Common myeloid progenitor, CD34-positive (primary cell): ENCODE measurements at regions of chr6 and their contacts with region 1.

Region 1: GRCh38 chr6:40536442-40536841 is 50.7 kb downstream of the LRFN2 start:
- DNase-seq: no peak
- H3K4me3 ChIP-seq: no peak overlapping the region
- H3K27ac ChIP-seq: no peak overlapping the region
- H3K4me1 ChIP-seq: peaks cover 0 to 16% (median 2%) of the 10 kb centered on the region in 4 experiments
- H3K27me3 ChIP-seq: no peaks in the 10 kb centered on the region

Region 2: DNA sequence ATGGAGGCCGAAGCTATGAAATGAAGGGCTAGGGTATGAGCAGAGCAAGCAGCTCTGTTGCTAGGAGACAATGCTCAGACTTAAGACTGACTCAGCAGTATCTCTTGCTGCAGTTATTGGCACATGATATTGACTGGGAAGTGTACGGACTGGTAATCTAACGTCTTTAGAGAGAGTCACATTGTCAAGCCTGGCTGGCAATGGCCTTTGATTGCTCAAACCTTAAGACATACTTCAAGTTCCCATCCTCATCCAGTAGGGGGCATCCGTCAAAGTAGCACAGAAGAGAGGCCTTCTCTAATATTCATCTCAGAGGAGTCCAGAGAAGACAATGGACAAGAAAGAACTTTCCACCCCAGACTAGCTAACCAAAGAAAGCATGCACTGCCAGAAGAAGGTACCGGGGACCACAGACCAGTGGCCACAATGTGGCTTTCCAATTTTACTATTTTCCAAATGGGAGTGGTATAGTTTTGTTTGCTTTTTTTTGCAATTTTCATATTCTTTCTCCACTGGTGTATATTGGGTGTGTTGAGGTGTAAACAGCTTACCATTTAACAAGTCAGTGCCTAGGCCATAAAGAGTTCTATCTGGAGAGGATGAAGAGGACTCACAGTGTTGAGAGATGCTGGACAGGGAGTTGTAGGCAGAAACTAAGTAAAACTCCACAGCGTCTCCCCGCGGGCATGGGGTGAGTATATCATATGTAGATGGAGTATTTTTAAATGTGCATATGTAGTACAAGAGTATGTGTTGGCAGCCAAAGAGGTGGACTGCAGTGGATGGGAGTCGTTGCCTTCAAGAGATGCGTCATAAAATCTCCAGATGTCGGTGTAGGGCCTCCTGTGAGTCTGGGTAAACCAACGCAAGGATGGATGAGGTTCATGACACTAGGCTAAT is 14.0 kb after region 1 on chr6:
- CTCF ChIA-PET with region 1: interaction called, 26 read pairs
- POLR2A ChIA-PET with region 1: no interaction called
- DNase-seq: peak; percentile 61 to 76 (median 69)
- H3K4me3 ChIP-seq: no peak overlapping the region
- H3K27ac ChIP-seq: no peak overlapping the region
- H3K4me1 ChIP-seq: no peaks in the 10 kb centered on the region
- H3K27me3 ChIP-seq: peaks cover 0 to 2% (median 0%) of the 10 kb centered on the region in 5 experiments